ENCODE measurements at regions of chr6 and their contacts with region 1.

Region 1: GRCh38 chr6:132279592-132280139 is 121.6 kb downstream of the MOXD1 start:
- DNase-seq: peak; percentile 31 to 82 (median 60)
- ATAC-seq: peak; percentile 74 to 82 (median 81)
- H3K4me3 ChIP-seq: peak overlapping the region; percentile 32 to 39
- H3K4me3 Mint-ChIP-seq: peak overlapping the region; percentile 61 to 80 (median 67)
- H3K27ac ChIP-seq: no peak overlapping the region
- H3K27ac Mint-ChIP-seq: no peak overlapping the region
- H3K4me1 ChIP-seq: no peaks in the 10 kb centered on the region
- H3K4me1 Mint-ChIP-seq: no peaks in the 10 kb centered on the region
- H3K27me3 ChIP-seq: peaks cover 0 to 11% of the 10 kb centered on the region in 2 experiments
- H3K27me3 Mint-ChIP-seq: peaks cover 23 to 30% of the 10 kb centered on the region in 2 donors

Region 2: DNA sequence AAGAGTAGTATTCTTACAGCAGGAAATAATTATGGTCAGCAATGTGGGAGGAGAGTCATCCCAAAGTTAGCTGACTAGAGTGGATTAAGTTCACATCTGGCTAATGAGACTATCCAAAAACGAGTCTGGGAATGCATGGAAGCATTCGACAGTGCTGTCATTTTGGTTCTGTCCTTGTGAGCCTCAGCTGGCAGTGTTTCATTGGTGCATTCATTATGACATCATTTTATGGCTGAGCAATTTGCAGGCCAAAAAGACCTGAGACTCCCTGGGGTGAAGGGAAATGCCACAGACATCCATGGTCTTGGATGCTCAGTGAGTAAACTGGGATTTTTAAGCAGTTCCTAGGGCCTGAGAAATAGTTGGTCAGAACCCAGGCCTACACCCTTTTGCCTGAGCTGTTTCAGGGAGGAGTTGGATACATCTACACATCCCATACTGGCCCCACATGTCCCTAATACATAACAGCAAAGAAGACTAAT is 132.1 kb before region 1 on chr6:
- CTCF ChIA-PET with region 1: no interaction called
- POLR2A ChIA-PET with region 1: no interaction called
- DNase-seq: no peak
- ATAC-seq: no peak
- H3K4me3 ChIP-seq: no peak overlapping the region
- H3K4me3 Mint-ChIP-seq: no peak overlapping the region
- H3K27ac ChIP-seq: no peak overlapping the region
- H3K27ac Mint-ChIP-seq: no peak overlapping the region
- H3K4me1 ChIP-seq: no peaks in the 10 kb centered on the region
- H3K4me1 Mint-ChIP-seq: no peaks in the 10 kb centered on the region
- H3K27me3 ChIP-seq: no peaks in the 10 kb centered on the region
- H3K27me3 Mint-ChIP-seq: peaks cover 0 to 2% of the 10 kb centered on the region in 2 donors

Region 3: GRCh38 chr6:132289756-132290155 is 10.1 kb after region 1 on chr6:
- CTCF ChIA-PET with region 1: interaction called, 28 to 41 read pairs
- POLR2A ChIA-PET with region 1: no interaction called
- DNase-seq: no peak
- ATAC-seq: no peak
- H3K4me3 ChIP-seq: no peak overlapping the region
- H3K4me3 Mint-ChIP-seq: no peak overlapping the region
- H3K27ac ChIP-seq: no peak overlapping the region
- H3K27ac Mint-ChIP-seq: no peak overlapping the region
- H3K4me1 ChIP-seq: no peaks in the 10 kb centered on the region
- H3K4me1 Mint-ChIP-seq: no peaks in the 10 kb centered on the region
- H3K27me3 ChIP-seq: no peaks in the 10 kb centered on the region
- H3K27me3 Mint-ChIP-seq: peaks cover 4 to 10% of the 10 kb centered on the region in 2 donors

Region 4: DNA sequence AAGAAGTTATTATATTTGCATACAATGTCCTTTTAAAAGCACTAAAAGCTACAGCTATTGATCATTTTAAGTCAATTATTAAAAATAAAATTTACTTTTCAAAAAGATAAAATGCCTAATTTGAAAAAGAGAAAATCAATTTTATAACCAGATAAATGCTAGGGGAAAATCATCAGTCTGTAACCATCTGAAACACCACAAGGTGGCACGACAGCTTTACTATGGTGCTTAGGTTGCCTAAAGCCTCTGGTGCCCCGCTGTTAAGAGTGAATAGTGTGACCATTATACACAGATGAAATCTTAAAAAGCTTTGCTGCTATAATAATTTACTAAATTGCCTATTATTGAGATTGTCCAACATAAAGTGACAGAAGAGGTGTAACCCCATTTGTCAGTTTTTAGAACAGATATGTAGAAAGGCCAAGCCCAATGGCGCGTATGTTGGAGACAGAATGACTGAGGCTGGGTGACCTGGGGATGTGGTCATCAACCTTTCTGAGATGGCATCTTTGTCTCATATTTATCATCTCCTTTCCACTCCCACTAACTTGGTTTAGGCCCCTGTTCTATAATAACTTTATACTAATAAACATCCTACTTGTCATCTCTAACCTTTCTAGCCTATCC is 20.8 kb after region 1 on chr6:
- CTCF ChIA-PET with region 1: interaction called, 28 to 55 read pairs
- POLR2A ChIA-PET with region 1: interaction called in 1 of 2 experiments, 3 read pairs
- DNase-seq: peak in 2 of 35 experiments; percentile 7 to 35
- ATAC-seq: no peak
- H3K4me3 ChIP-seq: no peak overlapping the region
- H3K4me3 Mint-ChIP-seq: no peak overlapping the region
- H3K27ac ChIP-seq: no peak overlapping the region
- H3K27ac Mint-ChIP-seq: no peak overlapping the region
- H3K4me1 ChIP-seq: no peaks in the 10 kb centered on the region
- H3K4me1 Mint-ChIP-seq: no peaks in the 10 kb centered on the region
- H3K27me3 ChIP-seq: peaks cover 0 to 6% of the 10 kb centered on the region in 2 experiments
- H3K27me3 Mint-ChIP-seq: peaks cover 13 to 15% of the 10 kb centered on the region in 2 donors

Region 5: DNA sequence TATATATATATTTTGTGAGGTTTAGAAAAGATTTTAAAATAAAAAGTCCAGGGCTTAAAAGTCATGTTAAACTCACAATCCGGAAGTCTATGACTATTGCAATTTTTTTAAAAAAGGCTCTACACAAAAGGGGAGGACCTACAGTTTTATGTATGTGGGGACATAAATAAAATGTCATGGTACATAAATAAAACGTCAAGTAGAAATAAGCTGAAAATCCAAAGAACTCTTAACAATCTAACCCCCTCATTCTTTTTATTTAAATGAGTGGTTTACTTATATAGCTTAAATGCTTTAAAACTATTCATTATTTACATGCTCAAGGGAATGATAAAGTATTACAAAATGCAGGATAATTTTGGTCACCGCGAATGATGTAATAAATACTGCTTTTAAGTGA is 197.0 kb after region 1 on chr6:
- CTCF ChIA-PET with region 1: interaction called, 39 to 65 read pairs
- POLR2A ChIA-PET with region 1: no interaction called
- DNase-seq: no peak
- ATAC-seq: no peak
- H3K4me3 ChIP-seq: no peak overlapping the region
- H3K4me3 Mint-ChIP-seq: no peak overlapping the region
- H3K27ac ChIP-seq: no peak overlapping the region
- H3K27ac Mint-ChIP-seq: no peak overlapping the region
- H3K4me1 ChIP-seq: no peaks in the 10 kb centered on the region
- H3K4me1 Mint-ChIP-seq: peaks cover 0 to 9% (median 4%) of the 10 kb centered on the region in 3 donors
- H3K27me3 ChIP-seq: no peaks in the 10 kb centered on the region
- H3K27me3 Mint-ChIP-seq: no peaks in the 10 kb centered on the region

Region 6: DNA sequence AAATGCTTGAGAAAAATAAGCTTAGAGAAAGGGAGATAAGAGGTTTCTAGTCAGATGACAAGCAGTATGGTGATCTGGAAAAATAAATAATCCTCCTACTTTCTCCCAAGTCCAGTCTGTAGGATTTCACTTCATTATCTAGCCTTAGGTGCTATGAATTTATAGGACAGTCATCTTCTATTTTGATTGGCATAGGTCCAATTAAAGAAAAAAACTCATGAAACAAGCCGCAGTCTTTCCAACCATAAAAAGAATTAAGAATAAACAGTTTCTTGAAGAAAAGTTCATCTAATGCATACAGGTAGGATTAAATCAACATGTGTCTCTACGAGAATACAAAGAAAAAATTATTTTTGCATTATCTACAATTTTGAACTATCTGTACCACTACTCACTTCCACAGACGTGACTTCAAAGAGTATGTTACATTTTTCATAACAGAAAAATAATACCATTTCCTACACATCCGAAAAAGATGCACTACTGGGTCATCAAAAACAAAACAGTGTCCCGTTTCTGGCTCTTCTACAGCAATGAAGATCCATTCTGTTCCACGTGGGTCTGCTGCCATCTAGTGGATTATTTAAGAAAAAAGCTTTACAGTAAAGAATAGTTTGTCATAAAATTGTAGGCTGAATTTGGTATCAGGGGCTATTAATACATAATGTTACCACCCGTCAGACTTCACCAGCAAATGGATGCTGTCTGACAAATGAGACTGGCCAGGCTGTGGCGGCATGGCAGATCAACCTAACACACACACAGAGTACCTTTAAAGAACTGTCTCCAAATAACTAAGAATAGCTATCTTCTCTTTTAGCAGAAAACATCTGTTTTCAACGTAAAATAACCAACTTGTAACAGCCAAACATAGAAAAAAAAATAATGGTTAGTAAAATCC is 204.4 kb after region 1 on chr6:
- CTCF ChIA-PET with region 1: interaction called, 65 to 160 read pairs
- POLR2A ChIA-PET with region 1: no interaction called
- DNase-seq: peak in 26 of 35 experiments; percentile 6 to 80 (median 33)
- ATAC-seq: peak; percentile 50 to 70 (median 68)
- H3K4me3 ChIP-seq: no peak overlapping the region
- H3K4me3 Mint-ChIP-seq: no peak overlapping the region
- H3K27ac ChIP-seq: no peak overlapping the region
- H3K27ac Mint-ChIP-seq: no peak overlapping the region
- H3K4me1 ChIP-seq: no peaks in the 10 kb centered on the region
- H3K4me1 Mint-ChIP-seq: peaks cover 14 to 27% (median 18%) of the 10 kb centered on the region in 3 donors
- H3K27me3 ChIP-seq: no peaks in the 10 kb centered on the region
- H3K27me3 Mint-ChIP-seq: no peaks in the 10 kb centered on the region

Region 7: DNA sequence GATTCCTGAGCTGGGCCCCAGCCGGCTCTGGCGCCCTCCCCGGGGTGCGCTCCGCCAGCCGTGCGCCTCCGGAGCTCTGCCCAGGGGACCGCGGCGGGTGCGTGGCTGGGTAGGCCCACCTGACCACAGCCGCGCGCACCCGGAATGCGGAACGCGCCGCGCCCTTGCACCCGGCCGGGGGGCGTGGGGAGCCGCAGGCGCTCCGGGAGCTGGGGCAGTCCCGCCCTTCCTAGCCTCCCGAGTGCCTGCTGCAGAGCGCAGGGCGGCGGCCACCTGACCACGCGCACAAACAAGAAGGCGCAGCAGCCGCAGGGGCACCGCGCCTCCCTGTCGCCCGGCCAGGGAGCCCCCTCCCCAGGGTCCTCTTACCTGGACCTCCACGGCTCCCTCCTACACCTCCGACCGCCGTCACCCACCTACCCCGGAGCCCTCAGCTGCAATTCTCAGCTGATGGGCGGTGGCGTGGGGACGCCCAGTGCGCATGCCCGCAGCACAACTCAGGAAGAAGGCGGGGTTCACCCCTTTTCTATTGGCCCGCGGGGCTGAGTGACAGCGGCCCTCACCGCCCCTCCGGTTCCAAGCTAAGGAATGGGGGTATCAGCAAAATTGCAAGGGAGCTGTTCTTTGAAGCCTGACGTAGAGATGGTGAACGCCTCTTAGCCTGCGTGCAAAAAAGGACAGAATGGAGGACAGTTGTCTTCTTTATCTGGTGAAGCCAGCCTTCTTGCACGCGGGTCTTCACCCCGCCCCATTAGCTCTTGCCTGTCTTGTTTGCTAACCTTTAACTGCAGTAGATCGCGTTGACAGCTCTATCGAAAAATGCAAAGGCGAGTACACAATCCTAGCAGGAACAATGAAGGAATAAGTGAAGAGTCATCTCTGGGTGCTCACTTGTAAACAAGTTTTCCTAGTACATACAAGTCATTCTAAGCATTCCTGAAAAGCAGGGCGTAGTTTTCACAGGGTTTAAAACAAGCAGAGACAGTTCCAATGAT is 233.3 kb after region 1 on chr6 and contains the start of gene STX7:
- CTCF ChIA-PET with region 1: interaction called, 5 to 10 read pairs
- POLR2A ChIA-PET with region 1: no interaction called
- DNase-seq: peak; percentile 73 to 87 (median 81)
- ATAC-seq: peak; percentile 94 to 95 (median 95)
- H3K4me3 ChIP-seq: peak within 1 kb of the TSS; percentile 76 to 83
- H3K4me3 Mint-ChIP-seq: peak within 1 kb of the TSS; percentile 91 to 97 (median 93)
- H3K27ac ChIP-seq: peak within 1 kb of the TSS; percentile 2
- H3K27ac Mint-ChIP-seq: peak within 1 kb of the TSS; percentile 86 to 93
- H3K4me1 ChIP-seq: peaks cover 4 to 13% of the 10 kb centered on the region in 2 experiments
- H3K4me1 Mint-ChIP-seq: peaks cover 37 to 45% (median 43%) of the 10 kb centered on the region in 3 donors
- H3K27me3 ChIP-seq: no peaks in the 10 kb centered on the region
- H3K27me3 Mint-ChIP-seq: no peaks in the 10 kb centered on the region
- total RNA-seq, gene STX7: 13.3 to 27.4 (median 20.9) TPM

Measured in T-cell (primary cell).